ENCODE measurements at regions of chr2 and their contacts with region 1.

Region 1: DNA sequence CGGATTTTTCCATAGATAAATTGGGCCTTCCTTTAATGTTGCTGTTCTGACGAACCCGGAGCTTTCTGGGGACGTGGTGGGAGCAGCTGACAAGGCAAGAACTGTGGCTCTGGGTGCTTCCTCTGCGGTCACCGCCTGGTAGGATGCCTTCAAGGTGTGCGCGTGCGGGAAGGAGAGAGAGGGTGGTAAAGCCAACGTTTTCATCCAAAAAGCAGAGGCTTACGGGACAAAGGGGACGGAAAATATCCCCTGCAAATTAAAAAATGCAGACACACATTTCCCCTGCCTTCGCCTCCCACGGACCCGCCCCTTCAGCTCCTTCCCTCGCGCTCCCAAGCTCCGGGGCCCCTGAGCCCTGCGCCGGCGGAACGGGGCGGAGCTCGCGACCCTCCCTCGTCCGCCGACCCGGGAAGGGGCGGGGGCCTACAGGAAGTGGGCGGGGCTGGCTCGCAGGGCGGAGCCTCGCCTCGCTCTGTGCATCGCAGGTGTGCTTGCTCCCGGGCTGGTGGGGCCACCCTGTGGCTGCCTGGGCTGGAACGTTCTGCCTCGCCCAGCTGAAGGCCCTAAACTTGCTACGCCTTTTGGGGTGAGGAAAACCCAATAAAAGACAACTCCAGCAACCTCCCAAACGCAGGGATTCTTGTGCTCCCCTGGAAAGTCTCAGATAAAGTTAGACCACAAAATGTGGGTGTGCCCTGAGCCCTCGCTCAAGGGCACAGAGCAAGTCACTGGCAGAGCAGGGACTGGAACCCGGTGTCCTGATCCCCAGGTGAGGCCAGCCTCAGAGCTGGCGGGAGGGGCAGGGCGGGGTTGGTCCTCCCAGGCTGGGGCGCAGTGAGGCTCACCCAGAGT is 25.4 kb upstream of the SLC66A3 start:
- DNase-seq: peak; percentile 95
- ATAC-seq: peak; percentile 91
- H3K4me3 Mint-ChIP-seq: peak overlapping the region; percentile 61
- H3K27ac Mint-ChIP-seq: no peak overlapping the region
- H3K4me1 Mint-ChIP-seq: peaks cover 12% of the 10 kb centered on the region
- H3K27me3 Mint-ChIP-seq: peaks cover 10% of the 10 kb centered on the region
- CTCF ChIP-seq: no peak

Region 2: DNA sequence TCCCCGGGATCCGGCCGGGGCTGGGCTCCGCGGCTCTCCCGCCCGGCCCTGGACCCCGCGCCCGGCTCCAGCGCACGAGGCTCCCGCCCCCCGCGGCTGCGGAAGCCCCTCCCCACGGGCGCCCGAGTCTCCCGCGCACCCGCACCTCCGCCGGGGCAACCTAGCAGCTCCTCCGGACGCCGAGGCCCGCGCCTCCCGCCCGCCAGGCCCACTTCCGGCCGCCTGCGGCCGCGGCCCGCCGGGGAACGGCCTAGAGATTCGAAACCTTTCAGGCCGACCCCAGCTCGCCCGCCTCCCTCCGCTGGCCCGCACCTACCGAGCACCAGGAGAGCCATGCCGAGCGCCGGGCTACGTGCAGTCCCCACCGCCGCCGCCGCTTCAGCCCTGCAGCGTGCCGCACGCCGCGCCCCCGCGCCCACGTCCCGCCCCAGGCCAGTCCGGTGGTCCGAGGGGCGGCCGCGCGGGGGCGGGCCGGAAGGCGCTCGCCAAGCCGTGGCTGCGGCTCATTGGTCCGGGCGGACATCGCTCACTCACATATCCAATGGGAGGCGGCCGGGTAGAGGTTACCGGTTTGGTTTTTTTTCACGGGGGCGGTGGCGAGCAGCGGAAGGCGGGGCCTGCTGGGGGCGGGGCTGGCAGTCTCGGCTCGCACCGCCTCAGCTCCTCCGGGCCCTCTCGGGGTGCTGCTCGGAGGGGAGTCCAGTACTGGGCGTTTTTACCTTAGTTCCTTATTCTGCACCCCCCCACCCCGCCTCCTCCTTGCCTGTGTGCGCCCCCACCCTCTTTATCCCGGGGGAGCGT is 317.3 kb before region 1 on chr2 and contains the start of gene PDIA6:
- CTCF ChIA-PET with region 1: interaction called, 16 read pairs
- POLR2A ChIA-PET with region 1: interaction called, 5 read pairs
- DNase-seq: peak; percentile 97
- ATAC-seq: peak; percentile 91
- H3K4me3 Mint-ChIP-seq: peak within 1 kb of the TSS; percentile 88
- H3K27ac Mint-ChIP-seq: peak within 1 kb of the TSS; percentile 89
- H3K4me1 Mint-ChIP-seq: peaks cover 40% of the 10 kb centered on the region
- H3K27me3 Mint-ChIP-seq: no peaks in the 10 kb centered on the region
- CTCF ChIP-seq: no peak
- total RNA-seq, gene PDIA6: 331 to 344 TPM (median 340 TPM) in 3 replicates

Region 3: DNA sequence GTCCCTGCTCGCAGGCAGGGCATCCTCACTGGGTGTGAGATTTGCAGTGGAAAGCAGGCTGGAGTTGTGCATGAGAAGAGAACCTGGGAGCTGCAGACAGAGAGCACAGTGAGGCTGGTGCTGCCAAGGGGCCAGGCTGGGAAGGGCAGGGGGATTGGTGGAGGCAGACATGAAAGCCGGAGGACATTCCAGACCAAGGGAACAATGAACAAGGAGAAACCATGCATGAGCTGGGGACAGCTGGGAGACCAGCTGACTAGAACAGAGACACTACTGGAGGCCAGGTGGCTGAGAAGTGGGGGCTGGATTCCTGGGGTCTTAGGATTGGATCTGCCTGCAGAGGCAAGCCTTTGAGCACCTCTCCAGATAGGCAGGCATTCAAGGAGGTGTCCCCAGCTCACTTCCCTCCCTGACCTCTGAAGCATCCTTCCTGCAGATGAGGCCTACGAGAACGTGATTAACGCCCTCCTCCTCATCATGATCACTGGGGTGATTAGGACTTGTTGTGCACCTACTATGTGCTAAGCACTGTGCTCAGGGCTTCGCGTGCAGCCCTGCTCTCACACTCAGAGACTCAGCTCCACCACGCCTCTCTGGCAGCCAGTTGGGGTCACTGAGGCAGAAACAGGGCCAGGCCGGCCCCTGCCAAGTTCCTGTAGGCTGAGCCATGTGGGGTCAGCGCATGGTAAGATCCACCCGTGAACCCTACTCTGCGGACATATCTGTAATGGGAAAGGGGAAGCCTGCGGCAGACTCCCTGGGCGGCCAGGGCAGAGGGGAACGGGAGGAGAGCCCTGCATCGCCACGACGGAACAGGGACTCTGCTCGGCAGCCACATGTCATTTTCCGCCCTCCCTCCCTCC is 49.3 kb before region 1 on chr2:
- CTCF ChIA-PET with region 1: interaction called, 10 read pairs
- POLR2A ChIA-PET with region 1: no interaction called
- DNase-seq: no peak
- ATAC-seq: peak; percentile 63
- H3K4me3 Mint-ChIP-seq: no peak overlapping the region
- H3K27ac Mint-ChIP-seq: no peak overlapping the region
- H3K4me1 Mint-ChIP-seq: no peaks in the 10 kb centered on the region; the same call in 1 of the 2 replicates
- H3K27me3 Mint-ChIP-seq: no peaks in the 10 kb centered on the region
- CTCF ChIP-seq: no peak

Region 4: DNA sequence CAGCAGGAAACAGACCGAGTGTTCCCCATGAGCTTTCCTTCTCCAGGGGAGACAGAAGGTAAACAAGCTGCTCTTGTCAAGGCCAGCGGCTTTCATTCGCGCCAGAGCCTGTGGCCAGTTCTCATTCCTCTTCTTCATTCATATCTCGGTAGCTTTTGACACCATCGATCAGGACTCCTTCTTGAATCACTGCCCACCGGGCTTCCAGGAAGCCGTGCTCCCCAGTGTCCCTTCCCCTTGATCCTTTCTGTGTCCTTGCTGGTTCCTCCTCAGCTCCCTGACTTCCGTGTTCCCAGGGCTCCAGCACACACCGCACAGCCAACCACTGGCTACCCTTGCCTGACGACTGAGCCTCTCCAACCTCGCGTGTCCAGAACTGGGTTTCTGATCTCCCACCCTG is 39.5 kb after region 1 on chr2:
- CTCF ChIA-PET with region 1: interaction called, 12 read pairs
- POLR2A ChIA-PET with region 1: no interaction called
- DNase-seq: no peak
- ATAC-seq: no peak
- H3K4me3 Mint-ChIP-seq: no peak overlapping the region
- H3K27ac Mint-ChIP-seq: no peak overlapping the region
- H3K4me1 Mint-ChIP-seq: peaks cover 3% of the 10 kb centered on the region; the same call in 1 of the 2 replicates
- H3K27me3 Mint-ChIP-seq: no peaks in the 10 kb centered on the region
- CTCF ChIP-seq: no peak

Region 5: DNA sequence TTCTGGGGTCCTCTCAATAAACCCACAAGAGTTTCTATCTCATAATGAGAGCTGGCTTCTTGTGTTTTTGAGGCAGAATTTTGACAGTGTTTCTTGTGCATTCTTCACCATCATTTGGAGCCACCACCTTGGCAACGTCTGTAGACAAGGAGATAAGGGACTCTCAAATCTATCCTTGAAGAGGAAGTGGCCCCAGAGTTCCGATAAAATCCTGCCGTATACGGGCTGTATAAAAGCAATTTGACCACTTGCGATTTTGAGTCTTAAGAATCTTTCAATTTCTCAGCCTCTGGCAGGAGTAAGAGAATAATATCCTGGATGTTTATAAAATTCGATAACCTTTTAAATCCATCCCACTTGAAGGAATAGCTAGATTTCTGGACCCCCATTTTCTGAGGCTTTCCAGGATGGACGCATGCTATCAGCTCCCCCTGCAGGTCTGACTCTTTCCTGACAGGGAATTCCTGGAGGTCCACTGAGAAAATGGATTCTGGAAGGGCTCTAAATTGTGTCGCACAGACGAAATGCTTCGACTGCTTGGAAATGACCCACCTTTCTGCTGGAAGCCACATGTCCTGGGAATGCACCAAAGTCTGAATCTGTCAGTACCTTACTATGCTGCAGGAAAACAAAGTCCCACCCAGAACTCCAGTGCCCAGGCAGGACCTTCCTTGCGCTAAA is 282.1 kb after region 1 on chr2:
- CTCF ChIA-PET with region 1: interaction called, 91 read pairs
- POLR2A ChIA-PET with region 1: interaction called, 4 read pairs
- DNase-seq: peak; percentile 65
- ATAC-seq: peak; percentile 79
- H3K4me3 Mint-ChIP-seq: no peak overlapping the region
- H3K27ac Mint-ChIP-seq: no peak overlapping the region
- H3K4me1 Mint-ChIP-seq: no peaks in the 10 kb centered on the region
- H3K27me3 Mint-ChIP-seq: peaks cover 1% of the 10 kb centered on the region
- CTCF ChIP-seq: peak; percentile 49; the same call in 1 of the 2 replicates

Region 6: DNA sequence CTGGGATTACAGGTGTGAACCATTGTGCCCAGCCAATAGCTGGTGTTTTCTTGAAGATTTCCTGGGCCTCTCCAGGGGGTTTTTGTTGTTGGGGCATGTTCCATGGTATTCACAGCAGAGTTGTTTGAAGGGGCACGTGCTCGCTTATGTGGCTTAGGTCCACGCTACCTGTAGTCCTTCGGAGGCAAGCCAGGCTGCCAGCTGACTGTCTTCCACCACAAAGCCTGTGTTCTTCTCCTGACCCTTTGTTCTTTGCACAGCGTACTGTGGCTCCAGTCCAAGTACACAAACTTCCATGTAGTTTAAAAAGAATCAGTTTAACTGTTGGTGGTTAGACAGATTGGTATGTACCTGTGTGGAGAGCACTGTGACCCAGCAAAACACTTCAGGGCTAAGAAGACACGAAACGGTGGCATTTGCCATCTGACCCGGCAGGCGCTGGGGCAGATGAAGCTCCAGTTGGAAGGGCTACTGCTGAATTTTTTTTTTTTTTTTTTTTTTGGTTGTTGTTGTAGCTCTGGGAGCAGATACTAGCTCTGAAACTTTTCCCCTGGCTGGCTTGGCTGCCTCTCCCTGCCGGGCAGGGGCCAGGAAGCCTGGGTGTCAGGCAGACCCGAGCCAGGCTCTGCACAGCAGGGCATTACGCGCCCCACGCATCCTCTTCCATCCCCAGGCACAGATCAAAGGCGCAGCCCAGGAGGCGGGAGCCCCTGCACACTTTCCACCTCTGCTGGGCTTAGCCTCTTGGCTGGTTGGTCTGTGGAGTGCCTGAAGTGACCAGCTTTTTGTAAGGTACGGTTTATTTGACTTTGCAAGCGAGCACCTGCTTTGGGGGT is 409.7 kb after region 1 on chr2:
- CTCF ChIA-PET with region 1: interaction called, 13 read pairs
- POLR2A ChIA-PET with region 1: no interaction called
- DNase-seq: no peak
- ATAC-seq: peak; percentile 23
- H3K4me3 Mint-ChIP-seq: peak overlapping the region; percentile 26
- H3K27ac Mint-ChIP-seq: peak overlapping the region; percentile 71
- H3K4me1 Mint-ChIP-seq: peaks cover 71% of the 10 kb centered on the region
- H3K27me3 Mint-ChIP-seq: no peaks in the 10 kb centered on the region
- CTCF ChIP-seq: no peak